Activated B cell treated with CpG ODN at 0.5 μM for 24 hours (primary cell): ENCODE measurements at regions of chr1 and their contacts with region 1.

Region 1: DNA sequence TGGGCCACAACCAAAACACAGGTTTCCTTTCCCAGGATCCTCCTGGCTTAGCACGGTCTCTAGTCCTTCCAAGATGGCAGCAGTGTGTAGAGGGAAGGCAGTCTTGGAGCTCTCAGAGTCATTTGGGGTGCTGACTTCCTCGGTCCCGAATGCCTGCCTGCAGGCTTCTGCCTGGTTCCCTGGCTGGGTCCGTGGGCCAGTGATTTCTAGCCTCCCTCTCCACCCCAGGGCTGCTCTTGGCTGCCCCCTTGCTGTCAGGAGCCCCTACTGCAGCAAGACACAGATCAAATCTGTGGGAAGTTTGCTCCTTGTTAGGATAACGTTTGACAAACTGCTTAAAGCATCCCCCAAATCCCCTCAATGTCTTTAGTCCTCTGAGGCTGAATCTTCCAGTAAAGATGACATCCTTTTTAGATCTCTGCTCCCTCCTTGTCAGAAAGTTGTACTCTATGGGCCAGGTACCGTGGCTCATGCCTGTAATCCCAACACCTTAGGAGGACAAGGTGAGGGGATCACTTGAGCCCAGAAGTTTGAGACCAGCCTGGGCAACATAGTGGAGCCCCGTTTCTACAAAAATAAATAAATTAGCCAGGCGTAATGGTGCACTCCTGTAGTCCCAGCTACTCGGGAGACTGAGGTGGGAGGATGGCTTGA is 272.5 kb downstream of the RRAGC start:
- DNase-seq: peak; percentile 46
- ATAC-seq: peak; percentile 83
- H3K4me3 Mint-ChIP-seq: no peak overlapping the region
- H3K27ac Mint-ChIP-seq: peak overlapping the region; percentile 33
- H3K4me1 Mint-ChIP-seq: peaks cover 13% of the 10 kb centered on the region
- H3K27me3 Mint-ChIP-seq: no peaks in the 10 kb centered on the region
- CTCF ChIP-seq: no peak

Region 2: DNA sequence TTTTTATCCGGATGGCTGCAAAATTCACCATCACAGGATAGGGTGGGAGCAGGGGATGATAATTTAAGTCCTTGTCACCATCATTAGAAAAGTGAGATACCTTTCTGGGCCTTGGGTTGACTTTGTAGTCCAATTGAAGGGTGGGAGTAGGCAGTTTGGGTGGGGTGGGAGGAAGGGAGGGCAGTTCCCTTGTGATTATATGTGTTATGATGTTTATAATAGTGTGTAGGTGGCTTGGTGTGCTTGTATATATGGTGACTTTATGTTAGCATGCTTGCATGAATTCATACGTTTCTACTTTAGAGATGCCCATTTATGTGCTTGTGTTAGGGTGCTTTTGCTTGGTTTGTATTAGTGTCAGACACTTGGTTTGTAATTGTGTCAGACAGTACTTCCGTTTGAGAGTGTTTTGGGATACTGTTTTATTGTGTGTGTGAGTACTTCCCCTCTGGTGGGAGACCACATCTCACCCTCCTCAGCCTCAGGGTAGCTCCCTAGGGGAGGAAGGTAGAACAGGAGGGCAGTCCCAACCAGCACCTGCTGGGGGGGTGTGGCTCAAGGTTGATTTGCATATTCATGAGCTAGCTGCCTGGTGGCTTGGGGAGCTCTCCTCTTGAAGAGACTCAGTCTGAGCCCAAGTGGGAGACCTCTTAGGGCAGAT is 534.2 kb before region 1 on chr1:
- CTCF ChIA-PET with region 1: no interaction called
- POLR2A ChIA-PET with region 1: no interaction called
- intact Hi-C with region 1: no loop called
- DNase-seq: peak; percentile 47
- ATAC-seq: peak; percentile 92
- H3K4me3 Mint-ChIP-seq: peak overlapping the region; percentile 26
- H3K27ac Mint-ChIP-seq: peak overlapping the region; percentile 63
- H3K4me1 Mint-ChIP-seq: peaks cover 35% of the 10 kb centered on the region
- H3K27me3 Mint-ChIP-seq: no peaks in the 10 kb centered on the region
- CTCF ChIP-seq: no peak

Region 3: GRCh38 chr1:38152351-38153065 is 434.6 kb before region 1 on chr1:
- CTCF ChIA-PET with region 1: no interaction called
- POLR2A ChIA-PET with region 1: no interaction called
- intact Hi-C with region 1: loop called (anchors 10 kb)
- DNase-seq: no peak
- ATAC-seq: peak; percentile 74
- H3K4me3 Mint-ChIP-seq: peak overlapping the region; percentile 4
- H3K27ac Mint-ChIP-seq: peak overlapping the region; percentile 80
- H3K4me1 Mint-ChIP-seq: peaks cover 43% of the 10 kb centered on the region
- H3K27me3 Mint-ChIP-seq: no peaks in the 10 kb centered on the region
- CTCF ChIP-seq: no peak

Region 4: GRCh38 chr1:38360807-38361206 is 226.3 kb before region 1 on chr1:
- CTCF ChIA-PET with region 1: interaction called, 3 read pairs
- POLR2A ChIA-PET with region 1: no interaction called
- intact Hi-C with region 1: loop called (anchors 1 kb)
- DNase-seq: no peak
- ATAC-seq: no peak
- H3K4me3 Mint-ChIP-seq: no peak overlapping the region
- H3K27ac Mint-ChIP-seq: no peak overlapping the region
- H3K4me1 Mint-ChIP-seq: no peaks in the 10 kb centered on the region
- H3K27me3 Mint-ChIP-seq: no peaks in the 10 kb centered on the region
- CTCF ChIP-seq: no peak

Region 5: DNA sequence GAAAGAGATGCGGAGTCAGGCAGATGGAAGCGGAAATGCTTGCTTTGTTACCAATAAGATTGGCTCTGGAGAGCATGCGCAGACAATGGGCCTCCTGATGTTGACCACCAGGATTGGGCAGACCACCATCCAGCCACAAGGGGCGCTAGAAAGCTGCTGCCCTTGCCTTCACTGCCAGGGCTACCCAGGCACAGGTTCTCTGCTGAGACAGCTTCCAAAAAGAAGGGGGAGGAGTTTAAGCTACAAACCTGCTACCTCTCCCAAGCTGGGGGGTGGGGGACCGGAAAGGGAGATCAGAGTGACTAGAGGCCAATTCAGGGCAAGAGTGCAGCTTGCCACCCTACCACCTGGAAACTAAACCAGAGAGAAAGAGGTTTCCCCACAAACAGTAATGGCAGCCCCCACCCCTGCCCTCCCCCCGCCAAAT is 97.3 kb before region 1 on chr1:
- CTCF ChIA-PET with region 1: no interaction called
- POLR2A ChIA-PET with region 1: no interaction called
- intact Hi-C with region 1: loop called (anchors 5 kb)
- DNase-seq: no peak
- ATAC-seq: peak; percentile 77
- H3K4me3 Mint-ChIP-seq: no peak overlapping the region
- H3K27ac Mint-ChIP-seq: peak overlapping the region; percentile 20
- H3K4me1 Mint-ChIP-seq: peaks cover 14% of the 10 kb centered on the region
- H3K27me3 Mint-ChIP-seq: peaks cover 3% of the 10 kb centered on the region
- CTCF ChIP-seq: no peak